ENCODE measurements at regions of chr3 and their contacts with region 1.

Region 1: DNA sequence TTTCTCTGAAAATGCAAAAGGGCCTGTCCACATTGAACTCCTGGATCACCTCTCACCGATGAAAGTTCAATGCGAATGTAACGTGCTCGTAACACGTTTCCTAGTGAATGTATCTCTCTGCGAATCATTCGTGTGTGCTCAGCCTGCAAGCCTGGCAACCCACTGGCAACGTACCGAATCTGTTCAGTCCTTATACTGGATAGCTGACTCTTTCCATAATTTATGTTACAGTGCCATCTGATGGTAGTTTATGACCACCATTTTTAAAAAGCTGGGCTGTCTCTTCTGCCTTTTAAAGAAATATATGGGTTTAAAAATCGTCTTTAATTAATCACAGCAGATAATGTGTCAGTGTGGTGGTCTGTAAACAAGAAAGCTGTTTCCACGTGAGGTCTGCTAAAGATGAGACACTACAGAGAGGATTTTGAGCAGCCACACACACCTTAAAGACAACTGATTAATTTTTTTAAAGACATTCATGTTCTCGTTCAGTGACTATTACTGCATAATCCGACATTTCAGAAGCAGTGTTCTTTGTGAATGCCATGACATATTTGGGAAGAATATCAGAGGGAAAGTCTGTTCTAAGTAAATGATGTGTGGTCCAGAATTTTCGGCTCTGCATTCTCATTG is 69.4 kb upstream of the FOXP1 start:
- DNase-seq: peak in 7 of 10 donors; percentile 19 to 58 (median 46)
- H3K4me3 ChIP-seq: peak overlapping the region in 15 of 59 donors; percentile 1 to 48 (median 26)
- H3K27ac ChIP-seq: peak overlapping the region in 25 of 59 donors; percentile 2 to 59 (median 26)
- H3K27me3 ChIP-seq: no peaks in the 10 kb centered on the region
- CTCF ChIP-seq: peak; percentile 23 to 89 (median 68)

Region 2: DNA sequence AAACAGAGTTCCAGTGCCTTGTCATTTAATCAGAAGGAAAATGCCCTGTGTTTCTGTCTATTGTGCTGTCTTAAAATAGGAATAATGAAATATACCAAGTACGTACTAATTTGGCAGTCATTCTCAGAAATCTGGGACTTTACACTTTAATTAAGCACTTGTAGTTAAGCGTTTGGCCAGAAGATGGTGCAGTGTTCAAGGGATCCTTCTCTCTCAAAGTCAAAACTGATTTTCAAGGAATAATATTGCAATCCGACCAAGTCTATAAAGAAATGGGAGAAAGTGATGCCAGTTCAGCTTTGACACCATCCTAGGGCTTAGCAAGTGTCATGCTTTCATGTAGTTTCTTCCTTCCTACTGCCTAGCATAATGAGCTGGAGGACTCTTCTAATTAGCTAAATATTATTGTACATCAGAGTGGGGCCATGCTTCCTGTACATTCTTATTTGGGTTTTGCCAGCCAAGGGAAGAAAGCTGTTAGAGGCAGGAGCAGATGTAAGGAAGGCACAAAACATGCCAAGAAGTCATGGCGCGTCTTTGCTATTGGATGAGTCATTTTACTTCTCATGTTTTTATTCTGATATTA is 1588.6 kb before region 1 on chr3:
- intact Hi-C with region 1: loop called (anchors 10 kb)
- DNase-seq: peak in 1 of 10 donors; percentile 20
- H3K4me3 ChIP-seq: no peak overlapping the region
- H3K27ac ChIP-seq: peak overlapping the region in 27 of 59 donors; percentile 1 to 62 (median 32)
- H3K27me3 ChIP-seq: no peaks in the 10 kb centered on the region
- CTCF ChIP-seq: peak; percentile 59 to 89 (median 80)

Region 3: GRCh38 chr3:70090322-70090913 is 1562.5 kb before region 1 on chr3:
- intact Hi-C with region 1: loop called in 1 of 2 experiments (anchors 10 kb)
- DNase-seq: no peak
- H3K4me3 ChIP-seq: peak overlapping the region in 7 of 59 donors; percentile 2 to 44 (median 20)
- H3K27ac ChIP-seq: no peak overlapping the region
- H3K27me3 ChIP-seq: peaks cover 0 to 5% (median 0%) of the 10 kb centered on the region in 45 donors
- CTCF ChIP-seq: peak; percentile 67 to 92 (median 80)

Region 4: DNA sequence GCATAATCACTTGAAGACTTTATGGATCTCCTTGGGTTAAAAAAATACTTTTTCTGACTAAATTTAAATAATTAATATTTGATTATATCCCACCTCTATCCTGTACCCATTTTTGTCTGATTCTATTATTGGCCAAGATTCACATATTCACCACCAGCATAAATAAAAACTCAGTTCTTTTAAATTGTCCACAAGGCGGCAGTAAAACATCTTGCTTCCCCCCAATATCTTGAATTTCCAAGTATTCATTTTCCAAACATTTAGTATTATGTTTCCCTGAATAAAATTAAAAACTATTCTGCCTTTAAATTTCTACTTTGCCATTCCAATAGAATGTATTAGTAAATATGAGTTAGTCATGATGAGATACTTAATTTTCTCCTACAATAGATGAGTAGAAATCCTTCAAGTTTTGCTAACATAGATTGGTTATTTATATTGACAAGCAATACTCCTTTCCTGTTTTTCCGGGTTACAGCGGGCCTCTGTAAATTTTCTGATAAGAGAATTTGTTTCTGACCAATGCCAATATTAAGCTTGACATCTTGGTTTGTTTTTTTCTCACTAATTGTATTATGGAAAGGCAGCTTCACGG is 1121.7 kb before region 1 on chr3:
- intact Hi-C with region 1: loop called (anchors 5 to 10 kb)
- DNase-seq: no peak
- H3K4me3 ChIP-seq: no peak overlapping the region
- H3K27ac ChIP-seq: no peak overlapping the region
- H3K27me3 ChIP-seq: peaks cover 0 to 3% (median 0%) of the 10 kb centered on the region in 45 donors
- CTCF ChIP-seq: peak; percentile 46 to 80 (median 67)